A549 (cell line): ENCODE measurements at regions of chr19 and their contacts with region 1.

Region 1: DNA sequence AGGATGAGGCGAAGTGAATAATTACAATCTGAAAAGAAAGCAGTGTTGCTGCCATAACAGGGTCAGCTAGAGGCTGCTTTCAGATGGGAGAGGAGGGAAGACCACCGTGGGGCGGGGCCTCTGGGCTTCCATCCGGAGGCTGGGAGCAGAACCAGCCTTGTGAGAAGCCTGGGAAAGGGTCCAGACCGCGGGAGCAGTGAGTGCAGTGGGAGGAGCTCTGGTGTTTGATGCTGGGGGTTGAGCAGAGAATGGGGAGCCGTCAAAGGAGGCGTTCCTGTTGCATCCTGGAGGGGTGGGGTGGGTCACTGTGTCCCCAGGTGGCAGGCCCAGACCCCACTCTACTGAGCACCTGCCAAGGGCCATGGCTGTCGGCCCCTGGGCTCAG is 18.1 kb downstream of the NKPD1 start:
- DNase-seq: no peak
- ATAC-seq: no peak
- H3K4me3 ChIP-seq: no peak overlapping the region
- H3K27ac ChIP-seq: no peak overlapping the region
- H3K4me1 ChIP-seq: no peaks in the 10 kb centered on the region
- CTCF ChIP-seq: no peak
- EP300 ChIP-seq: no peak
- POLR2A ChIP-seq: no peak
- RAD21 ChIP-seq: no peak

Region 2: DNA sequence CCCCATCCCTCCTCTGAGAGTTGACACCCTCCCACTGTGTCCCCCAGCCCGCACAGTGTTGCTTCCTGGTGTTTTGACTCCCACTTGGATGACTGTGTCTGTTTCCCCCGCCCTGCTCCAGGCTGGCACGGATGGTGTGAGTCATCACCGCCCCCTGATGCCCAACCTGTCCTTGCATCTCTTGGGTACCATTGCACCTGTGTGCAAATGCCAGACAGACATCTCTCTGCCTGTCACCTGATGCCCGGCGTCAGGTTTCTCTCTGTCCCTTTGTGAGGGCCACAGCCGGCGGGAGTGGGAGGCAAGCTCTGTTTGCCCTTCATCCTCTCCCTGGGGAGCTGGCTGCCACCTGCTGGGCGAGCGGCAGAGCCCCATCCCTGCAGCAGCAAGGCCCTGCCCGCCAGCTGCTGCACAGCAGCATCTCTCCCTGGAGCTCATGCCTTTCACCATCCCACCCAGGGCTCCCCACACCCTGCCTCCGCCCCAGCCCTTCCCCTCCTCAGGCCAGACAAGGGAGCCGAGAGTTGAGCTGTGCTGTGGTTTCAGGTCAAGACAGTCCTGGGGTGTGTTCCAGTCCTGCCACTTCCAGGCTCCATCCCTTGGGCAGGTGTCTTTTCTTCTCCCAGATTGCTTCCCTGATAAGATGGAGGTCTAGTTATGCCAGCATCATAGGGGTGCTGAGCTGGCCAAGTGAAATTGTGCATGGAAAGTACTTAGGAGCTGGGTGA is 11.7 kb before region 1 on chr19:
- CTCF ChIA-PET with region 1: interaction called, 51 read pairs
- POLR2A ChIA-PET with region 1: no interaction called
- DNase-seq: peak; percentile 54
- ATAC-seq: peak; percentile 86 to 88
- H3K4me3 ChIP-seq: no peak overlapping the region
- H3K27ac ChIP-seq: peak overlapping the region in 1 of 2 experiments; percentile 13; a peak in 2 of 6 replicates
- H3K4me1 ChIP-seq: peaks cover 10% of the 10 kb centered on the region
- CTCF ChIP-seq: peak; percentile 51
- EP300 ChIP-seq: no peak
- POLR2A ChIP-seq: no peak
- RAD21 ChIP-seq: peak; percentile 31 to 48; a peak in 3 of 5 replicates

Region 3: DNA sequence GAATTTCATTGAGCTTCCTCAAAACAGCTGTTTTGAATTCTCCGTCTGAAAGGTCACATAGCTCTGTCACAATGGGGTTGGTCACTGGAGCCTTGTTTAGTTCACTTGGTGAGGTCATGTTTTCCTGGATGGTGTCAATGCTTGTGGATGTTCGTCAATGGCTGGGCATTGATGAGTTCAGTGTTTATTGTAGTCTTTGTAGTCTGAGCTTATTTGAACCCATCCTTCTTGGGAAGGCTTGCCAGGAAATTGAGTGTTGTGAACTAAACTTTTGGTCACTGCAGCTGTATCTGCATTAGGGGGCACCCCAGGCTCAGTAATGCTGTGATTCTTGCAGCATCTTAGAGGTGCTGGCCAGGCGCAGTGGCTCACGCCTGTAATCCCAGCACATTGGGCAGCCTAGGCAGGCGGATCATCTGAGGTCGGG is 57.9 kb after region 1 on chr19:
- CTCF ChIA-PET with region 1: no interaction called
- POLR2A ChIA-PET with region 1: no interaction called
- DNase-seq: peak in 1 of 2 experiments; percentile 74
- ATAC-seq: peak; percentile 63 to 84; a peak in 4 of 6 replicates
- H3K4me3 ChIP-seq: no peak overlapping the region
- H3K27ac ChIP-seq: no peak overlapping the region
- H3K4me1 ChIP-seq: peaks cover 5% of the 10 kb centered on the region; the same call in 1 of the 3 replicates
- CTCF ChIP-seq: peak; percentile 48
- EP300 ChIP-seq: no peak
- POLR2A ChIP-seq: no peak
- RAD21 ChIP-seq: peak; percentile 63 to 82

Region 4: DNA sequence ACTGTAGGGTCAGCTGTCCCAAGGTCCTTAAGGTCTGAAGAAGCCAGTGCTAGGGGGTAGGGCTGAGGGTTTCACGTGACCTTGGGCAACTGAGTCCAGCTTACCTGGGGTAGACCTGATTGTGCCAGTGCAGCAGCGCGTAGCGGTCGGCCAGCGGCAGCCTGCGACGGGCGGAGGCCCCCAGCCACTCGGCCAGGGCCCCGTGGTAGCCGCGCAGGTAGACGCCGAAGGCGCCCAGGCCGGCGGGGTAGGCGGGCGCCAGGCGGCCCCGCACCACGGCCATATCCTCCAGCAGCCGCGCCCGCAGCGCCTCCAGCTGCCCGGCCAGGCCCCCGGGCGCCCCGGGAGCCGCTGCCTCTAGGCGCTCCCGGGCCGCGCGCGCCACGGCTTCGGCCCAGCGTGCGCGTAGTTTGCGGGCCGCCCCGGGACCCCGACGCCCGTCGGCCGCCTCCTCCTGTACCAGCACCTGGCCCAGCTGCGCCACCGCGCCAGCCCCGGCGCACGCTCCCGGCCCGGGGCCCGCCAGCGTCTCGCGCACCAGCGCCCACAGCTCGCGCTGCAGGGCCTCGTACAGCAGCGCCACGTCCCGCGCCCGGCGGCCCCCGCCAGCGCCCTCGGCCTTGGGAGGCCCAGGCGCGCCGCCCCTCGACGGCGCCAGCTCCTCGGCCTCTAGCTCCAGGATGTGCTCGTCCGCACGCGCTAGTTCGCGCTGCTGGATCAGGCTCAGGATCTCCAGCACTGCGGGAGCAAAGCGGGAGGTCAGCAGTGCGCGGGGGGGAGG is 91.6 kb after region 1 on chr19:
- CTCF ChIA-PET with region 1: no interaction called
- POLR2A ChIA-PET with region 1: no interaction called
- DNase-seq: no peak
- ATAC-seq: peak in 1 of 2 experiments; percentile 12; a peak in 1 of 6 replicates
- H3K4me3 ChIP-seq: no peak overlapping the region
- H3K27ac ChIP-seq: no peak overlapping the region
- H3K4me1 ChIP-seq: no peaks in the 10 kb centered on the region
- CTCF ChIP-seq: no peak
- EP300 ChIP-seq: no peak
- POLR2A ChIP-seq: no peak
- RAD21 ChIP-seq: no peak